T-cell (primary cell): ENCODE measurements at regions of chr1 and their contacts with region 1.

Region 1: GRCh38 chr1:52691821-52692220 is 6.3 kb downstream of the COA7 start:
- DNase-seq: no peak
- ATAC-seq: no peak
- H3K4me3 ChIP-seq: no peak overlapping the region
- H3K4me3 Mint-ChIP-seq: no peak overlapping the region
- H3K27ac ChIP-seq: no peak overlapping the region
- H3K27ac Mint-ChIP-seq: no peak overlapping the region
- H3K4me1 ChIP-seq: no peaks in the 10 kb centered on the region
- H3K4me1 Mint-ChIP-seq: peaks cover 0 to 6% (median 1%) of the 10 kb centered on the region in 3 donors
- H3K27me3 ChIP-seq: no peaks in the 10 kb centered on the region
- H3K27me3 Mint-ChIP-seq: no peaks in the 10 kb centered on the region

Region 2: DNA sequence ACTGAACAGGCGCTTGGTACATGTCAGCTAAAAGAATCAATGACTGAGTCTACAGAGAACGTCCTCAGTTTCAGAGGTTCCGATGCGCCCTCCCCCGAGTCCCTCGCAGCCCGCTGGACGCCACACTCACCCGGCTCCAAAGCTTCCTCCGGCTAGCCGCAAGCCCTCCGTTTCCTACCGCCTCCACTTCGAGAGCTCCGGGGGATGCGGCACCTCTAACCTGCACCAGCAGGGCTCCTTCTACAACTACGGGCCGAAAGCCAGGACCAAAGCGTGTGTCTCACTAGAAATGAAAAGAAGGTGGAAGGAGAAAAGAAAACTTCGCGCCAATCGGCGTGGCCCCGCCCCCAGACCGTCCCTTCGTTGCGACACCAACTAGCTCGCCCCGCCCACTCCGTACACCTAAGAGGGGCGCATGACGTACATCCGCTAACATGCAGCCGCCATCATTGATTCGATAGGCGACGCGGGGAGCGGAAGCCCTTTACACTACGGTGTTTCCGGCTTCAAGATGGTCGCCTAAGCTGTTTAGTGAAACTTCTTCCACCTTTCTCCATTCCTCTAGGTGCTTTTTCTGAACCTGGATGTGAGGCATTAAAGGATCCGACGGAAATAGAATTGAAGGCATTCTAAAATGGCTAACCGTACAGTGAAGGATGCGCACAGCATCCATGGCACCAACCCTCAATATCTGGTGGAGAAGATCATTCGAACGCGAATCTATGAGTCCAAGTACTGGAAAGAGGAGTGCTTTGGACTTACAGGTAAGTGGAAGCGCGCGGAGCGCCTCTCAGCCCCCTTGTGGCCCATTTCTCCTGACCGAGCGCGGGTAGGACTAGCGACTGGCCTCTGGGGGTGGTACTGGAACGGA is 287.5 kb before region 1 on chr1 and contains the starts of genes ORC1 and PRPF38A:
- CTCF ChIA-PET with region 1: interaction called in 1 of 2 experiments, 10 read pairs
- POLR2A ChIA-PET with region 1: interaction called in 1 of 2 experiments, 3 read pairs
- DNase-seq: peak; percentile 90 to 99 (median 97)
- ATAC-seq: peak; percentile 93 to 98 (median 96)
- H3K4me3 ChIP-seq: peak within 1 kb of the TSS; percentile 74 to 96
- H3K4me3 Mint-ChIP-seq: peak within 1 kb of the TSS; percentile 97 to 100 (median 100)
- H3K27ac ChIP-seq: peak within 1 kb of the TSS; percentile 92
- H3K27ac Mint-ChIP-seq: peak within 1 kb of the TSS; percentile 97 to 98
- H3K4me1 ChIP-seq: peaks cover 16 to 21% of the 10 kb centered on the region in 2 experiments
- H3K4me1 Mint-ChIP-seq: peaks cover 38 to 49% (median 47%) of the 10 kb centered on the region in 3 donors
- H3K27me3 ChIP-seq: no peaks in the 10 kb centered on the region
- H3K27me3 Mint-ChIP-seq: no peaks in the 10 kb centered on the region
- total RNA-seq, gene ORC1: 1.7 to 2.1 (median 2.0) TPM
- total RNA-seq, gene PRPF38A: 58.6 to 66.1 (median 64.7) TPM

Region 3: GRCh38 chr1:52552505-52553361 is 139.1 kb before region 1 on chr1 and contains the start of gene TUT4:
- CTCF ChIA-PET with region 1: no interaction called
- POLR2A ChIA-PET with region 1: interaction called in 1 of 2 experiments, 11 read pairs
- DNase-seq: peak; percentile 53 to 83 (median 68)
- ATAC-seq: peak; percentile 58 to 63 (median 61)
- H3K4me3 ChIP-seq: peak within 1 kb of the TSS; percentile 86 to 97
- H3K4me3 Mint-ChIP-seq: peak within 1 kb of the TSS in 2 of 3 donors; percentile 69 to 75
- H3K27ac ChIP-seq: peak within 1 kb of the TSS; percentile 98
- H3K27ac Mint-ChIP-seq: peak within 1 kb of the TSS; percentile 77 to 85
- H3K4me1 ChIP-seq: peaks cover 16 to 38% of the 10 kb centered on the region in 2 experiments
- H3K4me1 Mint-ChIP-seq: peaks cover 44 to 46% (median 44%) of the 10 kb centered on the region in 3 donors
- H3K27me3 ChIP-seq: no peaks in the 10 kb centered on the region
- H3K27me3 Mint-ChIP-seq: no peaks in the 10 kb centered on the region
- total RNA-seq, gene TUT4: 109 to 143 (median 129) TPM

Region 4: GRCh38 chr1:52713590-52713989 is 21.8 kb after region 1 on chr1:
- CTCF ChIA-PET with region 1: no interaction called
- POLR2A ChIA-PET with region 1: no interaction called
- DNase-seq: no peak
- ATAC-seq: no peak
- H3K4me3 ChIP-seq: no peak overlapping the region
- H3K4me3 Mint-ChIP-seq: no peak overlapping the region
- H3K27ac ChIP-seq: no peak overlapping the region
- H3K27ac Mint-ChIP-seq: no peak overlapping the region
- H3K4me1 ChIP-seq: no peaks in the 10 kb centered on the region
- H3K4me1 Mint-ChIP-seq: no peaks in the 10 kb centered on the region
- H3K27me3 ChIP-seq: peaks cover 0 to 6% of the 10 kb centered on the region in 2 experiments
- H3K27me3 Mint-ChIP-seq: no peaks in the 10 kb centered on the region

Region 5: GRCh38 chr1:52748119-52748518 is 56.3 kb after region 1 on chr1:
- CTCF ChIA-PET with region 1: interaction called in 1 of 2 experiments, 4 read pairs
- POLR2A ChIA-PET with region 1: interaction called in 1 of 2 experiments, 12 read pairs
- DNase-seq: peak in 1 of 35 experiments; percentile 21
- ATAC-seq: no peak
- H3K4me3 ChIP-seq: no peak overlapping the region
- H3K4me3 Mint-ChIP-seq: no peak overlapping the region
- H3K27ac ChIP-seq: no peak overlapping the region
- H3K27ac Mint-ChIP-seq: no peak overlapping the region
- H3K4me1 ChIP-seq: no peaks in the 10 kb centered on the region
- H3K4me1 Mint-ChIP-seq: peaks cover 26 to 31% (median 27%) of the 10 kb centered on the region in 3 donors
- H3K27me3 ChIP-seq: no peaks in the 10 kb centered on the region
- H3K27me3 Mint-ChIP-seq: no peaks in the 10 kb centered on the region

Region 6: DNA sequence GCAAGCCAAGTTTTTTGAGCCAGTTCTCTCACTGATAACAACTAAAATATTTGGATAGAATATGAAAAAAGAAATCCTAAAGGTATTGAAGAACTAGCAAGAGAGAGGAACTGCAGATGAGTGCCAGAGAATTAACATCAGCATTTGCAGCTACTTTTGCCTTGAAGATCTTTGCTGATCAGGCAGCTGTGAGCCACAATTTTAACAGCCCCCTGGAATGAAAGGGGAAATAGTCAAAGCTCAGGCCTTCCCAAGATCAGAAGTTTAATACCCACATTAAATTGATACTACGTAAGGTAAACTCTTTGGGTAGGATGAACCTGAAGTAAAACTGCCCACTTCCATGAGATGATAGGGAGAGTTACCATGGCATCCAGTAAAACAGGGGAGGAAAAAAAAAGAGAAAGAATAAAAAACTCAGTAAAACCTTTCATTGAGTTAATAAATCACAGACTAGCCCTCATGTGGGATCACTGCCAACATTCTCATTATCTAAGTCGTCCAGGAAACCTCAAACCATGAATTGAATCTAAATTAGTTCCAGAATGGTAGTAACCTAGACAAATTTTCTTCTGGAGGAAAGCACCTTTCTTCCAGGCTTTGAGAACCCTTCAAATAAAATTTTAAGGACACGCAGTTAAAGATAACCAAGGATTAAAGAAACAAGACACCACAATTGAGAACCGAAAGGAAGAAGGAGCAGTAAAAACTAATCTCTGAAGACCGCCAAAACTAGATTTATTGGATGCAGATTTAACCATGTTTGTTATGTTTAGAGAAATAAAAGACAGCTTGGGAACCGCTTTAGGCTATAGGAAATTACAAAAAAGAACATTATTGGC is 263.5 kb after region 1 on chr1:
- CTCF ChIA-PET with region 1: no interaction called
- POLR2A ChIA-PET with region 1: no interaction called
- DNase-seq: no peak
- ATAC-seq: no peak
- H3K4me3 ChIP-seq: no peak overlapping the region
- H3K4me3 Mint-ChIP-seq: no peak overlapping the region
- H3K27ac ChIP-seq: no peak overlapping the region
- H3K27ac Mint-ChIP-seq: no peak overlapping the region
- H3K4me1 ChIP-seq: no peaks in the 10 kb centered on the region
- H3K4me1 Mint-ChIP-seq: peaks cover 0 to 2% (median 0%) of the 10 kb centered on the region in 3 donors
- H3K27me3 ChIP-seq: no peaks in the 10 kb centered on the region
- H3K27me3 Mint-ChIP-seq: no peaks in the 10 kb centered on the region